Right ventricle myocardium superior (tissue), 1 donor: ENCODE measurements at regions of chr5 and their contacts with region 1.

Region 1: DNA sequence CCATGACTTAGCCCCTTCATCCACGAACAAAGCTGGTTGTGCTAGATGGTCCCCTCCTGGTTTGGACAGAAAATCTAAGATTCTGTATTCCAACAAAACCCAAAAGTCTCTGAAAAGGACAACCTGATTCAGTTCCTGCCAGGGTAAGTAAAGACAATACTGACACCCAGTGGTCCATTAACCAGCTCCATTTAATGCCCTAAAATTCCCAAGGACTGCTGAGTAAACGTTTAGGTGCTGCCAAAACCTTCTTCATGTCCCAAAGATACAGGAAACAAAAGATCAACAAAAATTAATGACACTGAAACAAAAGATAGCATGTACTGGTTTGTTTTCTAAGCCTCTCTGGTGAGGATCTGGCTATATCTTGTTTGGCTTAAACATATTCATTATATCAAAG is 25.3 kb upstream of the PPP1R2B start:
- DNase-seq: no peak
- ATAC-seq: peak; percentile 84

Region 2: DNA sequence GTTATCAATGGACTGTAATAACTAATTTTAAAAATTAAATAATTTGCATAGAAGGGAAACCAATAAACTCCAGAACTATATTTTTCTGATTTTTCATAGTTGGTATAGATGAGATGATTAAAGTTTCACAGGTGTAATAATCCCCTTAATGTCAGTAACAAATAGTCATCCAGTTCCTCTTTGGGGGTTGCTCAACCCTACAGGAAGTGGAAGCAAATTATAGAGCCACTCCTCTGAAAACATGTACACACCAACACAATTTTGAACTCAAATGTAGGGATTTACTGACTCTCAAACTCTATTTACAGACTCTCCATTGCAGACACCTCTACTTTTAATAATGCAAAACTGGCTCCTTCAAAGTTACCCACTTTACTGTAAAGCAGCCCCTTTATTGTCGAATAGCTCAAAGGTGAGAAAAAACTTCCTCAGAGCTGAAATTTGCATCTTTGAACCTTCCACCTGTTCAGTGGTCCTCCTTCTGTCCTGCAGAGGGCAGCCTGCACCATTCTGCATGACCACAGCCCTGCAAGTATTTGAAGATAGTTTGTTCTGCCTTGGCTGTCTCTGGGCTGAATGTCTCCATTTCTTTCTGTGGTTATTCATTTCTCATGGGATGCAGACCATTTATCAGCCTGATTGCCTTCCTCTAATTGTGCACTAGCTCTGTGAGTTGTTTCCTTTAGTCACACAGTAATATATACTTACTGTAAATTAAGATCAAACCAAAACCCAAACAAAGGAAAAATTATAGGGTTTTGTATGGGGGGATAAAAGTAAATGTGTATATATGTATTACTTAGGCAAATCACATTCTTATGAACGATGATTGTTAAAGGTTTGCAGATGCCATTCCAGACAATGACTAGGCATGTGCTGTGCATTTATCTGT is 881.0 kb before region 1 on chr5:
- intact Hi-C with region 1: loop called (anchors 10 kb)
- DNase-seq: peak; percentile 54
- ATAC-seq: peak; percentile 90

Region 3: DNA sequence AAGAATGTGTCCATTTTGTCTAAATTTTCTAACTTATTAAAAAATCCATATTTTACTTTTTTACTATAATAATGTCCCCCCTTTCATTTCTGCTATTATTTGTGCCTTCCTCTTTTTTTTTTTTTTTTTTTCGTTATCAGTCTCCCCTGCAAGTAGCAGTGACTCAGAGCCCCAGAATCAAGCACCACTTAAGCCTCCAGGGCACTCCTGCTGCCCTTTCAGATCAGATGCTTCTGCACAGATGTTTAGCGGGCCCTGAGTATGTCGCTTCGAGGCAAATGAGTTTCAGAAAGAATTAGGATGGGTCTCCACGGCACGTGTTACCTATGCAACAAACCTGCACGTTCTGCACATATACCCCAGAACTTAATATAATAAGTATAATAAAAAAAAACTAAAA is 306.1 kb after region 1 on chr5:
- intact Hi-C with region 1: loop called (anchors 10 kb)
- DNase-seq: no peak
- ATAC-seq: peak; percentile 62